ENCODE measurements at regions of chr2 and their contacts with region 1.

Region 1: DNA sequence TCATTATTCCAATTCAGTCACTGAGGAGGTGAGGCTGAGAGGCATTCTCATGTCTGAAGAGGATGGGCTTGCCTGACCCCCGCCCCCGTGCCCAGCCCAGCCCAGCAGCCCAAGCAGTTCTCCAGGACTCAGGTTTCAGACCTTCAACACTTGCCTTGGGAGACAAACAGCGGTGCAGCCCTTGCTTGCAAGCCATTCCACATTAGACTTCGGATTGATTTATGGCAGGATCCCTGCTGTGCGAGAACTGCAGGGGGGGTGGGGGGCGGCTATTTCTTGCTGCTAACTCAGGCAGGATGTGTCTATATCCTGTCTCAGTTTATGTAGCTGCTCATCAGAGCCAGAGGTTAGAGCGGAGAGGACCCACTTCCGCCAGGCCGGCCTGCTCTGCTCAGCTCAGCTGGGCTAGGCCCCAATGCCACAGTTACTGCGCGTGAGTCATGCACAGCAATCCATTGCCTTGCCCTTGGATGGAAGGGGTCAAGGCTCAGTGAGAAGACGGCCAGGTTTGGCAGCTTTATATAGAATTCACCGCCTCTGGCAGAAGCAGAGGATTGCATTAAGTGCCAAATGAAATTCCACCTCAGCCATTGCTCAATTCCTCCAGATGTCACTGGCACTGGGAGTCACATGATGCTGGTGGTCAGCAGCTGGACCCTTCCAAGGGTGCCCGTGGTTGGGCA is 1.8 kb downstream of the GYPC start:
- DNase-seq: peak; percentile 40
- ATAC-seq: peak; percentile 69
- H3K4me3 Mint-ChIP-seq: peak overlapping the region; percentile 94
- H3K27ac Mint-ChIP-seq: peak overlapping the region; percentile 94
- H3K4me1 Mint-ChIP-seq: peaks cover 68% of the 10 kb centered on the region
- H3K27me3 Mint-ChIP-seq: no peaks in the 10 kb centered on the region
- CTCF ChIP-seq: no peak

Region 2: GRCh38 chr2:126644630-126645191 is 13.1 kb before region 1 on chr2:
- CTCF ChIA-PET with region 1: no interaction called
- POLR2A ChIA-PET with region 1: interaction called, 8 read pairs
- intact Hi-C with region 1: loop called (anchors 1 kb)
- DNase-seq: no peak
- ATAC-seq: peak; percentile 98
- H3K4me3 Mint-ChIP-seq: peak overlapping the region; percentile 16
- H3K27ac Mint-ChIP-seq: peak overlapping the region; percentile 86
- H3K4me1 Mint-ChIP-seq: peaks cover 19% of the 10 kb centered on the region
- H3K27me3 Mint-ChIP-seq: no peaks in the 10 kb centered on the region
- CTCF ChIP-seq: no peak

Measured in activated B cell treated with CpG ODN at 0.5 μM for 24 hours (primary cell).